ENCODE measurements at regions of chr3 and their contacts with region 1.

Region 1: GRCh38 chr3:196942226-196942914 is at the start of gene NCBP2:
- DNase-seq: peak; percentile 94 to 99 (median 96)

Region 2: DNA sequence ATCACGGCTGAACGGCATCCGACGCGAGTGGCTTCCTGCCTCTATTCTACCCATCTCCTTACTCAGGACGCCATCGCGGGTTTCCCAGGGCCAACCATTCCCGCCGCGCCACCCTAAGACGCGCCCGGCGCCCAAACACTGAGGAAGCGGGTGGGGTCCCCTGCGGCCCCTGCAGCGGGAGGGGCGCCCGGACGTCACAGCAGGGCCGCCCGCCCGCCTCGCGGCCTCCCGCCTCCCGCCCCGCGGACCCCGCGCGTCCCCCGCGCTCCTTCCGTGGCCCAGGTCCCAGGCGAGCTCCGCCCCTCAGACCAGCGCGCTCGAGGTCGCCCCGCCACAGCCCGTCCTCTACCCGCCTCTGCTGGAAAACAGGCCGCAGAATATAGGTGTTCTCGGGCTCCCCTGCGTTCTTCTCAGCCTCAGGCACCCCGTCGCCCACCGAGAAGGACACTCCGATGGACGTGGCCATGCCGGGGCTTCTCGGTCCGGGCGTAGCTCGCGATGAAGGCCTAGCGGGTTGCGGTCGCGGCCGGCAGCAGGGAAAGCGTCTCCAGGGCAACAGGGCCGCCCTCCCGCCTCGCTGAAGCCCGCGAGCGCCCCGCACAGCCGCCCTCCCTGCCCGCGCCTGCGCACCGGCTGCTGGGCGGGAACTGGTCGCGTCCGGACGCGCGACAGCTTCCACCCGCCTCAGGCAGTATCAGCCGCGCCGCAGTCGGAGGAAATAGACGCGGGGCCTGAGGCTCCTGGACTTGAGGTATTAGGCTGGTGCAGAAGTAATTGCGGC is 624.5 kb before region 1 on chr3 and contains the start of gene DYNLT2B:
- intact Hi-C with region 1: loop called (anchors 5 kb)
- DNase-seq: peak; percentile 80 to 98 (median 88)

Region 3: DNA sequence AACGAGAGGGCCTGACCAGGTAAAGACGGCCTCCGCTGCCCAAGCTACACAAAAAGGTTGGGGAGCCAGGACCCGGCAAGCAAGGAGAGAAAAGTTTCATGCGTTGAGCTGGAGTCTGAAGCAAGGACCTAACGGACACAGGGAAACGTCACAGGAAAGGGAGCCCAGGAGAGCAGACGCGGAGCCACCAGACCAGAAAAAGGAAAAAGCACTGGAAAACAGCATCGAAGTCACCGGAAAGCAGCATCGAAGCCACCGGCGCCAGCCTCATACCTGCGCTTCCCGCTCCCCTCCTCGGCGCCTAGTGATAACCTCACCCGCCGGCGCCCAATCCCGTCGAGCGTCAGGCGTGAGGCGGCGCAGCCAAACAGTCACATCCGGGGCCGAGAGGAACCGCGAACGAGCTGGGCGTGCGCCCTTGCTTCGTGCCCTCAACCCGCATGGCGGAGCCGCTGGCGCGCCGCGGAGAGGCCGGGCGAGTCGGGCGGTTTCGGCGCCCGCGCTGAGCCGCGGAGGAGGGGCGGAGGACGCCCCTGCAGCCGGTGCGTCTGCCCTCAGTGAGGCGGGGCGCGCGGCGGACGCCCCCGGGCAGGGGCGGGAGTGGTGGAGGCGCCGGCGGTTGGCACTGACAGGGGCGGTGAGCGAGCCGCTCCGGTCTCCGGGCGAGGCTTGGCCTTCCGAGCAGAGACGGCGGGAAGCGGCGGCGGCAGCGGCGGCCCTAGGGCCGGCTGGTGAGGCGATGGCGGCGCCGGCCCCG is 373.9 kb before region 1 on chr3 and contains the starts of genes FBXO45 and WDR53:
- intact Hi-C with region 1: loop called (anchors 2 kb)
- DNase-seq: peak; percentile 92 to 99 (median 94)

Region 4: GRCh38 chr3:196711838-196712513 is 230.4 kb before region 1 on chr3 and contains the starts of genes CEP19 and PIGX:
- intact Hi-C with region 1: loop called (anchors 1 kb)
- DNase-seq: peak; percentile 78 to 99 (median 89)

Region 5: DNA sequence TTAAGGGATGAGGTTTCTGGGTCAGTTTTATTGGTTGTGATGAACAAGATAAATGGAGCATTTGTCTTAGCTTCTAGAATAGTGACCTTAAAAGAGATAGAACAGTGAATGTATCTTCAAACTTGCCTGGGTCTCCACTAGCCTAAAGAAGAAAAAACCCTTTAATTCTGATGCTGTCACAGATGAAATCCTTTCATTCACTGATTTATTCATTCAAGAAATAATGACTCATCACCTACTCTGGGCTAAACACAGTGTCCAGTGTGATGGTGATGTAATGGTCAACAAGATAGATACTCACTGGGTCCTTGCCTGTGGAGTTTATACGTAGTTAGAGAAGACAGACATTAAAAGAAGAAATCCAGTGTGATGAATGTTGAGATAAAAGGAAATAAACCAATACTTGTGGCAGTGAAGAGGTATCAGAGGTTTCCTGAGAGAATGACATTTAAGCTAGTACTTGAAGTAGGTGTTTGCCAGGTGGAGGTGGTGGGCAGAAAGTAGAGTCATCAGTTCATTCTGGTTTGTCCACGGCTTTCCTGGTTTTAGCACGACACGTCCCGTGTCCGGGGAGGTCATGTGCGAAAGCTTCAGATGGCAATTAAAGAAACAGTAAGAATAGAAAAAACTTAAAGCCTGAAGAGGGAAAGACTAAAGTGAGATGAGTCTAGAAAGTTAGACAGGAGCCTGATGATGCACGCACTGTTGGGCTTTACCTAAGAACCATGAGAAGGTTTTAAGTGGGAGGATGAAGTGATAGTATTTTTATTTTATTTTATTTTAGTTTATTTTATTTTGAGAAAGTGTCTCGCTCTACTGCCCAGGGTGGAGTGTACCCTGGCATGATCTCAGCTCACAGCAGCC is 184.3 kb before region 1 on chr3:
- intact Hi-C with region 1: no loop called
- DNase-seq: no peak

Region 6: DNA sequence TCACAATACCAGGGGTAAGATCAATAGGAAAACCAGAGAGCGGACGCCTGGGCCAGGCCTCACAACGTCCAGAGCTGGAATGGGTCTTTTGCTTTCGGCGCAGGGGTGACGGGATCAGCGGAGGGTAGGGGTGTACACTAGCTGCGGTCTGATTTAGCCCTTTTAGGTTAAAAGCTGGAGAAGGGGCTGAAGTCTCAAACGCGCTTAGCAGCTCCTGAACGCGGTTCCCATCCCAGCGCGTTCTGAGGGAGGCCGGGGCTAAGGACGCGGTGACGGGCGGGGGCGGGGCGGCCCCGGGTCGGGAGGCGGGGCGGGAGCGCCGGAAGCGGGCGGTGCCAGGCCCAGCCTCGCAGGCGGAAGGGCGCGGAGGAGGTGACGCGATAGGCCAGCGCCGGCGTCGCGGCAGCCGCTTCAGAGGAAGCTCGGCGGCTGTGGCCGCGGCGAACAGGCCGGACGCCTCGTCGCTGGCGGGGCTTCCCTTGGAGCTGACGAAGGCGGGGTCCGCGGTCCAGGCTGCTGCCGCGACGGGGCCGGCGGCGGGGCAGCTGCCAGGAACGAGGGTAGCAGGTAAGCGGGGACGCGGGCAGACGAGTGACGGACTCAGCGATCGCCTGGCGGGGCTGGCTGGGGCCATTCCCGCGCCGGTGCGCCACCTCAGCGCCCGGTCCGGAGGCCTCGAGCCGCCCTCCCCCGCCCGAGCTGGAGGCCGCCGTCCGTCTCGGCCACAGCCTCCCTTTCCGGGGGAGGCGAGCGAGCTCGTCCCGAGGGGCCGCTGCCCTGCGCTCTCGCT is 74.7 kb before region 1 on chr3 and contains the start of gene SENP5:
- intact Hi-C with region 1: loop called (anchors 2 kb)
- DNase-seq: peak; percentile 86 to 98 (median 90)